Caco-2 (cell line): ENCODE measurements at regions of chr6 and their contacts with region 1.

Region 1: GRCh38 chr6:57172136-57173055 is at the start of gene BAG2:
- DNase-seq: peak; percentile 92 to 93
- H3K4me3 ChIP-seq: peak within 1 kb of the TSS; percentile 57
- H3K4me3 Mint-ChIP-seq: peak within 1 kb of the TSS; percentile 95
- H3K27ac Mint-ChIP-seq: peak within 1 kb of the TSS; percentile 93
- H3K4me1 ChIP-seq: peaks cover 6% of the 10 kb centered on the region; the same call in 1 of the 2 replicates
- H3K4me1 Mint-ChIP-seq: peaks cover 21% of the 10 kb centered on the region
- H3K27me3 ChIP-seq: no peaks in the 10 kb centered on the region
- H3K27me3 Mint-ChIP-seq: no peaks in the 10 kb centered on the region
- CTCF ChIP-seq: peak in 1 of 2 experiments; percentile 26
- total RNA-seq, gene BAG2: 9.5 and 10.4 TPM in 2 replicates

Region 2: GRCh38 chr6:56955171-56956045 is 217.0 kb before region 1 on chr6:
- CTCF ChIA-PET with region 1: no interaction called
- POLR2A ChIA-PET with region 1: no interaction called
- intact Hi-C with region 1: loop called (anchors 10 kb)
- DNase-seq: peak; percentile 81 to 92
- H3K4me3 ChIP-seq: peak overlapping the region; percentile 56
- H3K4me3 Mint-ChIP-seq: peak overlapping the region; percentile 61
- H3K27ac Mint-ChIP-seq: no peak overlapping the region
- H3K4me1 ChIP-seq: peaks cover 2% of the 10 kb centered on the region; the same call in 1 of the 2 replicates
- H3K4me1 Mint-ChIP-seq: no peaks in the 10 kb centered on the region
- H3K27me3 ChIP-seq: peaks cover 3% of the 10 kb centered on the region; the same call in 1 of the 2 replicates
- H3K27me3 Mint-ChIP-seq: peaks cover 15% of the 10 kb centered on the region
- CTCF ChIP-seq: peak; percentile 81 to 85

Region 3: GRCh38 chr6:57089687-57090460 is 82.5 kb before region 1 on chr6 and contains the start of gene ZNF451:
- CTCF ChIA-PET with region 1: no interaction called
- POLR2A ChIA-PET with region 1: interaction called, 5 read pairs
- intact Hi-C with region 1: loop called (anchors 2 kb)
- DNase-seq: peak; percentile 97
- H3K4me3 ChIP-seq: peak within 1 kb of the TSS; percentile 71
- H3K4me3 Mint-ChIP-seq: peak within 1 kb of the TSS; percentile 68
- H3K27ac Mint-ChIP-seq: peak within 1 kb of the TSS; percentile 46
- H3K4me1 ChIP-seq: peaks cover 38% of the 10 kb centered on the region
- H3K4me1 Mint-ChIP-seq: peaks cover 38% of the 10 kb centered on the region
- H3K27me3 ChIP-seq: no peaks in the 10 kb centered on the region
- H3K27me3 Mint-ChIP-seq: no peaks in the 10 kb centered on the region
- CTCF ChIP-seq: no peak
- total RNA-seq, gene ZNF451: 57.6 and 62.3 TPM in 2 replicates

Region 4: GRCh38 chr6:57141451-57142177 is 30.8 kb before region 1 on chr6:
- CTCF ChIA-PET with region 1: no interaction called
- POLR2A ChIA-PET with region 1: no interaction called
- intact Hi-C with region 1: loop called (anchors 2 kb)
- DNase-seq: no peak
- H3K4me3 ChIP-seq: no peak overlapping the region
- H3K4me3 Mint-ChIP-seq: no peak overlapping the region
- H3K27ac Mint-ChIP-seq: no peak overlapping the region
- H3K4me1 ChIP-seq: no peaks in the 10 kb centered on the region
- H3K4me1 Mint-ChIP-seq: peaks cover 6% of the 10 kb centered on the region
- H3K27me3 ChIP-seq: no peaks in the 10 kb centered on the region
- H3K27me3 Mint-ChIP-seq: no peaks in the 10 kb centered on the region
- CTCF ChIP-seq: no peak

Region 5: GRCh38 chr6:57316581-57317059 is 144.2 kb after region 1 on chr6:
- CTCF ChIA-PET with region 1: no interaction called
- POLR2A ChIA-PET with region 1: no interaction called
- intact Hi-C with region 1: loop called (anchors 5 kb)
- DNase-seq: peak; percentile 84 to 85
- H3K4me3 ChIP-seq: peak overlapping the region; percentile 71
- H3K4me3 Mint-ChIP-seq: peak overlapping the region; percentile 92
- H3K27ac Mint-ChIP-seq: peak overlapping the region; percentile 92
- H3K4me1 ChIP-seq: peaks cover 14% of the 10 kb centered on the region; the same call in 1 of the 2 replicates
- H3K4me1 Mint-ChIP-seq: peaks cover 24% of the 10 kb centered on the region
- H3K27me3 ChIP-seq: no peaks in the 10 kb centered on the region
- H3K27me3 Mint-ChIP-seq: no peaks in the 10 kb centered on the region
- CTCF ChIP-seq: peak; percentile 82 to 84